ENCODE measurements at regions of chr10 and their contacts with region 1.

Region 1: GRCh38 chr10:70381471-70382421 is 679 bp downstream of the LRRC20 start:
- DNase-seq: peak; percentile 60
- ATAC-seq: peak; percentile 47
- H3K4me3 Mint-ChIP-seq: peak overlapping the region; percentile 83
- H3K27ac Mint-ChIP-seq: peak overlapping the region; percentile 60
- H3K4me1 Mint-ChIP-seq: peaks cover 23% of the 10 kb centered on the region
- H3K27me3 Mint-ChIP-seq: peaks cover 14% of the 10 kb centered on the region

Region 2: GRCh38 chr10:70233109-70233938 is 148.4 kb before region 1 on chr10 and contains the start of gene PPA1:
- CTCF ChIA-PET with region 1: interaction called, 11 read pairs
- POLR2A ChIA-PET with region 1: interaction called, 6 read pairs
- DNase-seq: peak; percentile 99
- ATAC-seq: peak; percentile 93
- H3K4me3 Mint-ChIP-seq: peak within 1 kb of the TSS; percentile 78
- H3K27ac Mint-ChIP-seq: peak within 1 kb of the TSS; percentile 79
- H3K4me1 Mint-ChIP-seq: peaks cover 45% of the 10 kb centered on the region
- H3K27me3 Mint-ChIP-seq: peaks cover 2% of the 10 kb centered on the region
- total RNA-seq, gene PPA1: 175 TPM

Region 3: GRCh38 chr10:70508912-70509756 is 127.4 kb after region 1 on chr10:
- CTCF ChIA-PET with region 1: no interaction called
- POLR2A ChIA-PET with region 1: no interaction called
- DNase-seq: no peak
- ATAC-seq: no peak
- H3K4me3 Mint-ChIP-seq: no peak overlapping the region
- H3K27ac Mint-ChIP-seq: no peak overlapping the region
- H3K4me1 Mint-ChIP-seq: peaks cover 3% of the 10 kb centered on the region
- H3K27me3 Mint-ChIP-seq: peaks cover 3% of the 10 kb centered on the region